Activated T-helper 2 cell treated with anti-CD3 and anti-CD28 coated beads, Interferon-gamma antibody, Interleukin-2, Interleukin-4, amounts not matched to agents 10 μg/mL and 5 μg/mL and 100 μg/mL, durations not matched to agents 14 hours and 24 hours and 36 hours (primary cell): ENCODE measurements at regions of chr2 and their contacts with region 1.

Region 1: DNA sequence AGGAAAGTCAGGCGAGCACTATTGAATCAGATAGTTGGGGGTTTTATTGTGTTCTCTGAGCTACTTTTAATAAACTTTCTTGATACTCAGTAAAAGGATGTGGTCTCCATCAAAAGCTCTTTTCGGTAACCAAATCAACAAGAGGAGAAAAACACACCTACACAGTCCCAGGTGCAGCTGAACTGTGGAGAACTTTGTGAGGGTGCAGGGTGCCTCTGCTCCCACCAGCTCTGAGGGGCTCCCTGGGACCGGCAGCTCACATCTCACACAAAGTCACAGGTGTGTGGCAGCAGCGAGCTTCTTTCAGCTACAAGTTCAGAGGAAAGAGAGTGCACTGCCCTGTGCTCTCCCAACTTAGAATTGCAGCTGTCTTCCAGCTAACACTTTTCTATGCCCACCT is 650.4 kb downstream of the RNF144A start:
- DNase-seq: peak; percentile 53
- H3K4me3 Mint-ChIP-seq: peak overlapping the region; percentile 37
- H3K27ac Mint-ChIP-seq: peak overlapping the region; percentile 82
- H3K4me1 Mint-ChIP-seq: peaks cover 63% of the 10 kb centered on the region
- H3K27me3 Mint-ChIP-seq: no peaks in the 10 kb centered on the region

Region 2: GRCh38 chr2:7523481-7524120 is 44.0 kb before region 1 on chr2:
- intact Hi-C with region 1: loop called (anchors 1 kb)
- DNase-seq: no peak
- H3K4me3 Mint-ChIP-seq: peak overlapping the region; percentile 46
- H3K27ac Mint-ChIP-seq: peak overlapping the region; percentile 88
- H3K4me1 Mint-ChIP-seq: peaks cover 69% of the 10 kb centered on the region
- H3K27me3 Mint-ChIP-seq: no peaks in the 10 kb centered on the region

Region 3: GRCh38 chr2:7552825-7553570 is 14.6 kb before region 1 on chr2:
- intact Hi-C with region 1: loop called (anchors 1 kb)
- DNase-seq: no peak
- H3K4me3 Mint-ChIP-seq: peak overlapping the region; percentile 76
- H3K27ac Mint-ChIP-seq: peak overlapping the region; percentile 90
- H3K4me1 Mint-ChIP-seq: peaks cover 51% of the 10 kb centered on the region
- H3K27me3 Mint-ChIP-seq: no peaks in the 10 kb centered on the region

Region 4: DNA sequence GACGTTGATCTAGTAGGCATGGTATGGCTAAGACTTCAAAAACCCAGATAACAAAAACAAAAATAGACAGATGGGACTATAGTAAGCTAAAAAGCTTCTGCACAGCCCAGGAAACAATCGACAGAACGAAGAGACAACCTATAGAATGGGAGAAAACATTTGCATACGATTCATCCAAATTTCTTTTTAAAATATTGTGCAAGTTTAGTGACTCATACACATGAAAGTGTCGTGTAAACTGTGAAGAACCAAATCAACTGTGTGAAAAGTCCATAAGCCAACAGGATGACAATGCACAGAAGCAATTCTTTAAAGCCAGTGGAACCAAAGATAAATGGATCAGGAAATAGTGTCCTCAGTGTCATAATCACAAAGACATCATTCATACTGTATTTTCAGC is 20.6 kb after region 1 on chr2:
- intact Hi-C with region 1: loop called (anchors 2 kb)
- DNase-seq: no peak
- H3K4me3 Mint-ChIP-seq: no peak overlapping the region
- H3K27ac Mint-ChIP-seq: peak overlapping the region; percentile 66
- H3K4me1 Mint-ChIP-seq: peaks cover 42% of the 10 kb centered on the region
- H3K27me3 Mint-ChIP-seq: no peaks in the 10 kb centered on the region

Region 5: DNA sequence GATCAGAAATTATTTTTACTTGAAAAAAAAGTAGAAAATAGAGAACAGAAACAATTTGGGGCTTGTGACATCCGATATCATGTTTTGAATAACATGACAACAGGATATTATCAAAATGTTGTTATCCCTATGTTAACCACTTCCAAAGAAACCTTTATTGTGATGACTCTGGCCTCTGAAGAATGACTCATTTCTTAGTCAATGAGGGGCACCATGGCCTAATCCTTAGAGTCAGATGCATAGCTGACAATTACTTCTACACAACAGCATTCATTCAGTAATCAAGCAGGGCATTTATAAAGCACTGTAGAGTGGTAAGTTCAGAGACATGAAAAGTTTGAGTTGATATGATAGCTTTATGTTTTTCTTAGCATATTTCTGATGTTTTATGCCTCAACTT is 52.6 kb after region 1 on chr2:
- intact Hi-C with region 1: loop called (anchors 2 kb)
- DNase-seq: no peak
- H3K4me3 Mint-ChIP-seq: no peak overlapping the region
- H3K27ac Mint-ChIP-seq: peak overlapping the region; percentile 25
- H3K4me1 Mint-ChIP-seq: peaks cover 35% of the 10 kb centered on the region
- H3K27me3 Mint-ChIP-seq: no peaks in the 10 kb centered on the region

Region 6: GRCh38 chr2:7672027-7672684 is 104.5 kb after region 1 on chr2:
- intact Hi-C with region 1: loop called (anchors 2 kb)
- DNase-seq: peak; percentile 51
- H3K4me3 Mint-ChIP-seq: peak overlapping the region; percentile 63
- H3K27ac Mint-ChIP-seq: peak overlapping the region; percentile 97
- H3K4me1 Mint-ChIP-seq: peaks cover 60% of the 10 kb centered on the region
- H3K27me3 Mint-ChIP-seq: no peaks in the 10 kb centered on the region